Testis (tissue), 5 donors: ENCODE measurements at regions of chr9 and their contacts with region 1.

Region 1: DNA sequence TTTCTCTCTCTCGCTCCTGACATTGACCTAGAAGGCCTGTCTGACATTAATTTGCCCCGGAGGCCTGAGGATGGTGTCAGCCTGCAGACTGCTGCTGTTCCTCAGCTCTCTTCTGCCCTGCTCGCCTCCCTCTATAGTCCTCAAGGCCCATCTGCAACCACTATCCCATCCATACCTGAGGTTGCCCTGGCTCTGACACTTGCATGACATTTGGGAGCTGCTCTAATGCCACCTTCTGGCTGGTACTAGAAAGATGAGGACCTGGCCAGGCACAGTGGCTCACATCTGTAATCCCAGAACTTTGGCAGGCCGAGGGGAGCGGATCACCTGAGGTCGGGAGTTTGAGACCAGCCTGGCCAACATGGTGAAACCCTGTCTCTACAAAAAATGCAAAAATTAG is 38.6 kb upstream of the GGTA1 start:
- DNase-seq: no peak
- H3K4me3 ChIP-seq: no peak overlapping the region
- H3K27ac ChIP-seq: no peak overlapping the region
- H3K4me1 ChIP-seq: no peaks in the 10 kb centered on the region
- H3K27me3 ChIP-seq: no peaks in the 10 kb centered on the region
- CTCF ChIP-seq: no peak
- POLR2A ChIP-seq: no peak

Region 2: DNA sequence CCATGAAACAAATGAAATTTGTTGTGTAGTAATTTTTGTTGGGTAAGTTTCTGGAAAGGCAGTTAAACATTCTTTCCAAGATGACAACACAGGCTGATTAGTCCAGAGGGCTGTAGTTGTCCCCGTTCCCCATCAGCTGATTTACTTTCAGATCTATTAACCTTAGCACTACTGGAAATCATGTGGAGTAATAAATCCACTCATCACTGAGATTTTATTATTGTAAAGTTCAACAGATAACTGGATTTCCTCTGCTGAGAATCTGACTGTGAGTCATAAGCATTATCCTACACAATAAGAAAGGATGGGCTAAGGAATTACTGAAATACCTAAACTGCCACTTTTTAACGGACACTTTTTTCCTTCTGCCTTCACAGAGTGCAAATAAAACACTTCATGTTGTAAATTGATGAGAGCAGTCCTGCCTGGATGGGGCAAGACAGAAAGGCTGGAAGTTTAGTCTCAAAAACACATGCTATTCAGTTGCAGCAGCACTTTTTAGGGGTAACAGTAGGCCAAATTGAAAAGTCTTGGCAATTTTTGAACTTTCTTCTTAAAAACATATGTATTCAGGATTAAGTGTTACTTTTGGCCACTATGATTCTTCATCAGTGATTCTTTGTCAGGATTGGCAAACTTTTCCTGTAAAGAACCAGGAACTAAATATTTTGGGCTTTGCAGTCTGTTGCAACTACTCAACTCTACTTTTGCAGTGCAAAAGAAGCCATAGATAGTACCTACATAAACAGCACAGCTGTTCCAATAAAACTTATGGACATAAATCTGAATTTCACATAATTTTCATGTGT is 175.2 kb before region 1 on chr9:
- intact Hi-C with region 1: no loop called
- DNase-seq: no peak
- H3K4me3 ChIP-seq: no peak overlapping the region
- H3K27ac ChIP-seq: peak overlapping the region; percentile 10 to 75
- H3K4me1 ChIP-seq: peaks cover 39% of the 10 kb centered on the region
- H3K27me3 ChIP-seq: no peaks in the 10 kb centered on the region
- CTCF ChIP-seq: no peak
- POLR2A ChIP-seq: no peak

Region 3: GRCh38 chr9:121765021-121765950 is 227.0 kb after region 1 on chr9:
- intact Hi-C with region 1: no loop called
- DNase-seq: peak; percentile 59
- H3K4me3 ChIP-seq: no peak overlapping the region
- H3K27ac ChIP-seq: peak overlapping the region; percentile 70 to 72
- H3K4me1 ChIP-seq: peaks cover 17% of the 10 kb centered on the region
- H3K27me3 ChIP-seq: no peaks in the 10 kb centered on the region
- CTCF ChIP-seq: no peak
- POLR2A ChIP-seq: no peak

Region 4: GRCh38 chr9:121963528-121963995 is 425.3 kb after region 1 on chr9:
- intact Hi-C with region 1: no loop called
- DNase-seq: no peak
- H3K4me3 ChIP-seq: no peak overlapping the region
- H3K27ac ChIP-seq: no peak overlapping the region
- H3K4me1 ChIP-seq: no peaks in the 10 kb centered on the region
- H3K27me3 ChIP-seq: no peaks in the 10 kb centered on the region
- CTCF ChIP-seq: no peak
- POLR2A ChIP-seq: no peak

Region 5: DNA sequence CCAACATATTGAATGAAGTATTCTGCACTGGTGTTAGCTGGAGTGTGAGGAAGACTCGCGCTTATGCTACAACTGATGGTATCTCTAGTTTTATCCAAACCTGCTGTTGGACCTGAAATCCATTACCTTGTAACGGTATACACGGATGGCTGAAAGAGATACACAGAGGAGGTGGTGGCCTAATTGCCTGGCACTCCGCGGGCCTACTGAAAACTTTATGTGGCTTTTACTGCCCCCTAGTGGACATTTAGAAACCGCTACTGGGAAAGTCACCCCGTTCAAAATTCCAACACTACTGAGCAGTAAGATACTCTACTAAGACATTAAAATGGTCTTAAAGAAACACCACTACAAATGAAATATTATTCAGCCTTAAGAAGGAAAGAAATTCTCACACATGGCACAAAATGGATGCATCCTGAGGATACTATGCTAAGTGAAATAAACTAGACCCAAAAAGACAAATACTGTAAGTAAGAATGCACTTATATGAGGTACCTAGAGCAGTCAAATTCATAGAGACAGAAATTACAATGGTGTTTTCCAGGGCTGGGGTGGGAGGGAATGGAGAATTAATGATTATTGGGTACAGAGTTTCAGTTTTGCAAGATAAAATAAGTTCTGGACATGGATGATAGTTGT is 454.4 kb after region 1 on chr9:
- intact Hi-C with region 1: loop called (anchors 5 kb)
- DNase-seq: peak; percentile 82
- H3K4me3 ChIP-seq: no peak overlapping the region
- H3K27ac ChIP-seq: no peak overlapping the region
- H3K4me1 ChIP-seq: no peaks in the 10 kb centered on the region
- H3K27me3 ChIP-seq: no peaks in the 10 kb centered on the region
- CTCF ChIP-seq: peak; percentile 84 to 93 (median 91)
- POLR2A ChIP-seq: no peak